ENCODE measurements at regions of chr19 and their contacts with region 1.

Region 1: DNA sequence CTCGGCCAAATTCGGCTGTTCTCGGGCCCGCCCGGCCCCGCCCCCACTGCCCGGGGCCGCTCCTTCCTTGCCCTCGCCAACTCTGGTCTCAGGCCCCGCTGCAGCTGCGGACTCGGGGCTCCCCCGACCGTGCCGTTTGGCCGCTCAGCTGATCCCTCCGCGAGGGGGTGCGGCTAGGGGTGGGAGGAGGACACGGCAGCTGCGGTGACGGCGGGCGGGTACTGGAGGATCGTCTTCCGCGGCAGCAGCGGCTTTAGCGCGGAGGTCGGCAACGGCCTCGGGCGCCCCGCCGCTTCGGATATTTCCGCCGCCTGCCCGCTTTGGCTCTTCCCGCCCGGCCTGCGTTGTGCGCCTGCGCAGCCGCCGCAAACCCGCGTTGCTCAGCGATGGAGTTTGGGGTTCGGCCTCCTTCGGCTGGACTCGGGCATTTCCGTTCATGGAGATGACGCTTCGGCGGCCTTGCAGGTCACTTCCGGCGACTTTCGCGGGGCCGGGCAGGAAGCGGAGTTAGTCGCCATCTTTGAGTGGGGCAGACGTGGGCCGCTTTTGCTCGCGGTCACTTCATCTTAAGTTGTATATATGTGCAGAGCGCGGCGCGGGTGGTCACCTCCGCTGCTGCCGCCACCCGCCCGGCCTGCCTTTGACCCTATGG is 338 bp upstream of the UBE2M start:
- DNase-seq: peak; percentile 99 to 100 (median 99)
- ATAC-seq: peak; percentile 71 to 84 (median 78)
- H3K4me3 ChIP-seq: peak overlapping the region; percentile 28 to 96 (median 77)
- H3K27ac ChIP-seq: peak overlapping the region; percentile 90 to 100 (median 100)
- H3K4me1 ChIP-seq: peaks cover 15 to 73% (median 63%) of the 10 kb centered on the region in 12 donors
- H3K27me3 ChIP-seq: peaks cover 0 to 19% (median 0%) of the 10 kb centered on the region in 9 donors
- CTCF ChIP-seq: peak in 1 of 12 donors; percentile 15
- POLR2A ChIP-seq: peak in 1 of 2 donors; percentile 63

Region 2: GRCh38 chr19:58513213-58513693 is 45.5 kb before region 1 on chr19:
- intact Hi-C with region 1: no loop called
- DNase-seq: no peak
- ATAC-seq: peak in 2 of 4 donors; percentile 2 to 3
- H3K4me3 ChIP-seq: peak overlapping the region in 1 of 12 donors; percentile 55
- H3K27ac ChIP-seq: peak overlapping the region in 6 of 12 donors; percentile 15 to 84 (median 48)
- H3K4me1 ChIP-seq: peaks cover 3 to 49% (median 25%) of the 10 kb centered on the region in 12 donors
- H3K27me3 ChIP-seq: no peaks in the 10 kb centered on the region
- CTCF ChIP-seq: no peak
- POLR2A ChIP-seq: no peak

Region 3: GRCh38 chr19:58543826-58544590 is 14.7 kb before region 1 on chr19 and contains the start of gene TRIM28:
- intact Hi-C with region 1: loop called in 2 of 10 experiments (anchors 1 kb)
- DNase-seq: peak; percentile 98 to 100 (median 98)
- ATAC-seq: peak; percentile 97 to 98 (median 97)
- H3K4me3 ChIP-seq: peak within 1 kb of the TSS; percentile 78 to 100 (median 92)
- H3K27ac ChIP-seq: peak within 1 kb of the TSS; percentile 87 to 98 (median 96)
- H3K4me1 ChIP-seq: peaks cover 12 to 36% (median 25%) of the 10 kb centered on the region in 12 donors
- H3K27me3 ChIP-seq: no peaks in the 10 kb centered on the region
- CTCF ChIP-seq: no peak
- POLR2A ChIP-seq: peak; percentile 55 to 96
- total RNA-seq, gene TRIM28: 122 to 265 (median 163) TPM

Region 4: GRCh38 chr19:58572818-58573657 is 14.3 kb after region 1 on chr19 and contains the start of gene MZF1:
- intact Hi-C with region 1: loop called in 4 of 10 experiments (anchors 1 to 2 kb)
- DNase-seq: peak; percentile 99 to 100 (median 100)
- ATAC-seq: peak; percentile 77 to 87 (median 84)
- H3K4me3 ChIP-seq: peak within 1 kb of the TSS; percentile 36 to 89 (median 77)
- H3K27ac ChIP-seq: peak within 1 kb of the TSS; percentile 88 to 99 (median 96)
- H3K4me1 ChIP-seq: peaks cover 3 to 38% (median 17%) of the 10 kb centered on the region in 12 donors
- H3K27me3 ChIP-seq: no peaks in the 10 kb centered on the region
- CTCF ChIP-seq: peak in 3 of 12 donors; percentile 7 to 30 (median 12)
- POLR2A ChIP-seq: peak in 1 of 2 donors; percentile 31
- total RNA-seq, gene MZF1: 7.5 to 12.0 (median 9.1) TPM